ENCODE measurements at regions of chr18 and their contacts with region 1.

Region 1: GRCh38 chr18:12391618-12392165 is 14.7 kb upstream of the AFG3L2 start:
- DNase-seq: peak; percentile 75
- H3K4me3 ChIP-seq: no peak overlapping the region
- H3K27ac ChIP-seq: no peak overlapping the region
- H3K4me1 ChIP-seq: no peaks in the 10 kb centered on the region
- H3K27me3 ChIP-seq: no peaks in the 10 kb centered on the region
- CTCF ChIP-seq: peak; percentile 91

Region 2: GRCh38 chr18:12049978-12050811 is 341.5 kb before region 1 on chr18:
- CTCF ChIA-PET with region 1: no interaction called
- POLR2A ChIA-PET with region 1: no interaction called
- intact Hi-C with region 1: no loop called
- DNase-seq: no peak
- H3K4me3 ChIP-seq: no peak overlapping the region
- H3K27ac ChIP-seq: no peak overlapping the region
- H3K4me1 ChIP-seq: no peaks in the 10 kb centered on the region
- H3K27me3 ChIP-seq: peaks cover 3% of the 10 kb centered on the region
- CTCF ChIP-seq: no peak

Region 3: DNA sequence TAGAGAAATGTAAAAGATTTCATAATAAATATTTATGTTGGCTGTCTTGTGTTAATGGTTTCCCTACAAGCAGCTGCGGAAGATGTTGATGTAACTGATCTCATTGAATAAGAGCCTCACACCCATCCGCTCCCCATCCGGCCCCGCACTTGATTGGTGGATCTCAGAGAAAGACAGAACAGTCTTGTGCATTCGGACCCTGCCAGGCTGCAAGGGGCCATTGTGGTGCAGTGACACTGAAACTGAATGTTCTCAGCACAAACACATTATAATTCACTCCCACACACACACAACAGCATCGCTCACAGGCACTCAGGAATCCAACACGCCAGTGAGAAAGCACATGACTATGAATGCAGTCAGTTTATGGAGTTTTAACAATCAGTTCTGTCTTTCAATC is 63.8 kb after region 1 on chr18:
- CTCF ChIA-PET with region 1: no interaction called
- POLR2A ChIA-PET with region 1: no interaction called
- intact Hi-C with region 1: no loop called
- DNase-seq: no peak
- H3K4me3 ChIP-seq: no peak overlapping the region
- H3K27ac ChIP-seq: no peak overlapping the region
- H3K4me1 ChIP-seq: no peaks in the 10 kb centered on the region
- H3K27me3 ChIP-seq: no peaks in the 10 kb centered on the region
- CTCF ChIP-seq: no peak

Region 4: GRCh38 chr18:12520442-12520992 is 128.8 kb after region 1 on chr18:
- CTCF ChIA-PET with region 1: no interaction called
- POLR2A ChIA-PET with region 1: no interaction called
- intact Hi-C with region 1: loop called (anchors 10 kb)
- DNase-seq: peak; percentile 20
- H3K4me3 ChIP-seq: no peak overlapping the region
- H3K27ac ChIP-seq: no peak overlapping the region
- H3K4me1 ChIP-seq: peaks cover 17% of the 10 kb centered on the region
- H3K27me3 ChIP-seq: no peaks in the 10 kb centered on the region
- CTCF ChIP-seq: no peak

Region 5: GRCh38 chr18:12659904-12660605 is 268.4 kb after region 1 on chr18:
- CTCF ChIA-PET with region 1: interaction called, 10 read pairs
- POLR2A ChIA-PET with region 1: no interaction called
- intact Hi-C with region 1: loop called (anchors 1 kb)
- DNase-seq: peak; percentile 77
- H3K4me3 ChIP-seq: no peak overlapping the region
- H3K27ac ChIP-seq: no peak overlapping the region
- H3K4me1 ChIP-seq: peaks cover 7% of the 10 kb centered on the region
- H3K27me3 ChIP-seq: no peaks in the 10 kb centered on the region
- CTCF ChIP-seq: peak; percentile 91

Region 6: GRCh38 chr18:12702221-12703095 is 310.8 kb after region 1 on chr18 and contains the starts of genes CEP76 and PSMG2:
- CTCF ChIA-PET with region 1: no interaction called
- POLR2A ChIA-PET with region 1: interaction called, 15 read pairs
- intact Hi-C with region 1: no loop called
- DNase-seq: peak; percentile 93
- H3K4me3 ChIP-seq: peak within 1 kb of the TSS; percentile 74
- H3K27ac ChIP-seq: peak within 1 kb of the TSS; percentile 99
- H3K4me1 ChIP-seq: peaks cover 21% of the 10 kb centered on the region
- H3K27me3 ChIP-seq: no peaks in the 10 kb centered on the region
- CTCF ChIP-seq: no peak
- total RNA-seq, gene CEP76: 20.5 and 22.3 TPM in 2 replicates
- total RNA-seq, gene PSMG2: 74.0 and 74.4 TPM in 2 replicates

Region 7: GRCh38 chr18:12934454-12935071 is 542.9 kb after region 1 on chr18:
- CTCF ChIA-PET with region 1: interaction called, 4 read pairs
- POLR2A ChIA-PET with region 1: no interaction called
- intact Hi-C with region 1: loop called (anchors 5 kb)
- DNase-seq: peak; percentile 86
- H3K4me3 ChIP-seq: no peak overlapping the region
- H3K27ac ChIP-seq: no peak overlapping the region
- H3K4me1 ChIP-seq: no peaks in the 10 kb centered on the region
- H3K27me3 ChIP-seq: no peaks in the 10 kb centered on the region
- CTCF ChIP-seq: peak; percentile 95